Activated CD8-positive, alpha-beta T cell treated with anti-CD3 and anti-CD28 coated beads, Interleukin-2, amount 10 ng/mL, durations not matched to agents 7 days and 5 days (primary cell): ENCODE measurements at regions of chr11 and their contacts with region 1.

Region 1: DNA sequence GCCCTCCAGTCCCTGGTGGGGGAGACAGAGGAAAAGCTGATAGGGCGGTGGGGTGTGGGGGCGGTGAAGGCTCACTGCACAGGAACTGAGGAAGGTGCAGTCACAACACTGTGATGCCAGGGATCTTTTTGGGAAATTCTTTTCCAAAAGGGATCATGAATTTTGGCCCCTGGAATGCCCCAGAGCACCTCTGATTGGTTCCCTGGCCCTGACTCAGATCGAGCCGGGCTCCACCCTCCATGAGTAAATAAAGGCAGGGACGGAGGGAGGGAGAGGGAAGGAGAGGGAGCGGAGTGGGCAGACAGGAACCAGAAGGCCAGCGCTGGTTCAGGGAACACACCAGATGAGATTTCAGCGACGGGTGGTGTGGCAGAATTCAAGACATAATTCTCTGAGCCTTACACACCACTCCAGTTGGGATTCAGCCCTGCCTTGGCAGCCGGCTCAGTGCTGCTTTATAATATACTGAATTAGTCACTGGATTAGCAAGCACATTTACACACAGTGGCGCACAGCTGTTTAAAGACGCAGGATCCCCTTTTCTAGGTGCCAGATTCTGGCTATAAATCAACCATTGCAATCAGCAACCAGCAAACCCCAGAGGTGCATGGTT is 80.3 kb downstream of the ETS1 start:
- DNase-seq: no peak
- ATAC-seq: peak; percentile 7
- H3K4me3 Mint-ChIP-seq: peak overlapping the region; percentile 78
- H3K27ac Mint-ChIP-seq: peak overlapping the region; percentile 96
- H3K4me1 Mint-ChIP-seq: peaks cover 97% of the 10 kb centered on the region
- H3K27me3 Mint-ChIP-seq: no peaks in the 10 kb centered on the region

Region 2: DNA sequence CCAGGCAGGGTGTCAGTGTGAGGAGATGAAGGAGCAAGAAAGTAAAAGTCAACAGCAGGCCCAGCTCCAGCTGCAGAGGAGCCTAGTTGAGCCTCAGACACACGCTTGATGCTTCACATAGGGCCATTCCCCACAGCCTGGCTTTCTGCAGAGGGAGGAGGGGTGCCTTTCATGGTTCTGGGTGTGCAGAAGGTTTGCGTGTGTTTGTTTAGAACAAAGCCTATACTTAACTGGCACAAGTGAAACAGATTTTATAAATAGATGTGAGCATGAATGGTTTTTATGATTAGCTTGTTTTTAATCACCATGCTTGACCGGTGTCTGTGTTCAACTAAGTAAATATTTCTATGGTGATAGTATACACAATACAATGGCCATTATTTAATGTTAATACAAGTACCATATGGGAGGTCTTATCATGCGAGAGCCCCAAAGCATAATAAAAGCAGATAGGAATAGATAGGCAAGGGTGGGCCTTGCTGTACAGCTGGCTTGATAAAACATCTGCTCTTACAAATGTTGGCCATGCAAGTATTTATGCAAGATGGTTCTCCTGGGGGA is 209.9 kb before region 1 on chr11:
- CTCF ChIA-PET with region 1: interaction called, 61 read pairs
- POLR2A ChIA-PET with region 1: interaction called, 19 read pairs
- DNase-seq: no peak
- ATAC-seq: peak; percentile 22
- H3K4me3 Mint-ChIP-seq: no peak overlapping the region
- H3K27ac Mint-ChIP-seq: peak overlapping the region; percentile 86
- H3K4me1 Mint-ChIP-seq: peaks cover 88% of the 10 kb centered on the region
- H3K27me3 Mint-ChIP-seq: no peaks in the 10 kb centered on the region

Region 3: GRCh38 chr11:128302425-128303186 is 204.5 kb before region 1 on chr11:
- CTCF ChIA-PET with region 1: interaction called, 7 read pairs
- POLR2A ChIA-PET with region 1: interaction called, 19 read pairs
- DNase-seq: peak; percentile 90
- ATAC-seq: peak; percentile 90
- H3K4me3 Mint-ChIP-seq: peak overlapping the region; percentile 89
- H3K27ac Mint-ChIP-seq: peak overlapping the region; percentile 96
- H3K4me1 Mint-ChIP-seq: peaks cover 79% of the 10 kb centered on the region
- H3K27me3 Mint-ChIP-seq: no peaks in the 10 kb centered on the region

Region 4: DNA sequence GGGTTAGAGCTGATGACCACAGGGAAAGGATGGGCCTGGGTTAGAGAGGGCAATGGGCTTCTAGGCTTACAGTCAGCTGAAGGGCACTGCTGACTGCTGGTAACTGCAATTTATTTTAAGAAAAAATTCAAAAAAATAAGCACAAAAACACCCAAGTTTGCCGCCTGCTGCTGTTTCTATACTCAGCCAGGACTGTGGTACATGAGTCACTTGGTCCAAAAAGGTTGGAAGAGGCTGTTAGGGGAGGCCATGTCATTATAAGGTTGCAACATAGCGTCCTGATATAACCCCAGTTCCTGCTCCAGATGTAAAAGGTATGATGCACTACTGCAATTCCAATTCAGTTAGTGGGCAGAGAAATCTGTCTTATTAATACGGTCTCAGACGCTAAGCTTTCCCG is 18.6 kb before region 1 on chr11:
- CTCF ChIA-PET with region 1: interaction called, 22 read pairs
- POLR2A ChIA-PET with region 1: interaction called, 87 read pairs
- DNase-seq: no peak
- ATAC-seq: peak; percentile 18
- H3K4me3 Mint-ChIP-seq: peak overlapping the region; percentile 26
- H3K27ac Mint-ChIP-seq: peak overlapping the region; percentile 87
- H3K4me1 Mint-ChIP-seq: peaks cover 95% of the 10 kb centered on the region
- H3K27me3 Mint-ChIP-seq: no peaks in the 10 kb centered on the region